ENCODE measurements at regions of chr2 and their contacts with region 1.

Region 1: DNA sequence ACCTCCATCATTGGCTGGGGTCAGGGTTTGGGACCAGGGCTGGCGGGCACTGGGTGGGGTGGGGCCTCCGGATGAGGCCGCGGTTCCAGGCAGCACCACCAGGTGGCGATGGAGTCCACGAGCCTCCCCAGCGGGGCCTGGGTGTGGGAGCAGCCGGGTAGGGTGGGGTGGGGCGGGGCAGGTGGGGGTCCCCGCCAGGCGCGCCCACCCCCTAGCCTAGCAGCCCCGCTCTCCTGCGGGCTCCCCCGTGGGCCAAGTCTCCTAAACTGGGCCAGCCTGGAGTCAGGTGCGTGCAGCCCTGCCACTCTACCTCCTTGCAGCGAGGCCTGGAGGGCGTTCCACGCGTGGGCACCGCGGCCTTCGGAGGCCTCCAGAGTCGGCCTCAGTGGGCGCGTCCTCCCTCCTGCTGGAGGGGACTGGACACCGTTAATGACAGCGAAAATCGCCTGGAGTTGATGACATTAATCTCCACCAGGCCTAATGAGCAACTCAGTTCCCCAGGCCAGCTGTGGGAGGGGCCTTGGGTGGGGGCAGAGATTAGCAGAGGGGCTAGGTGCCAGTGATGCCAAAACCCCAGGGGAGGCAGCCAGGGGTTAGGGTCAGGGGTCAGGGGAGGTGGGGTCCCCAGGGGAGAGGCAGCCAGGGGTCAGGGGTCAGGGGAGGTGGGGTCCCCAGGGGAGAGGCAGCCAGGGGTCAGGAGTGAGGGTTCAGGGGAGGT is 187.6 kb downstream of the TWIST2 start:
- DNase-seq: peak; percentile 43 to 79 (median 67)
- ATAC-seq: peak; percentile 91
- H3K4me3 ChIP-seq: no peak overlapping the region
- H3K4me3 Mint-ChIP-seq: no peak overlapping the region
- H3K27ac ChIP-seq: no peak overlapping the region
- H3K27ac Mint-ChIP-seq: no peak overlapping the region
- H3K4me1 ChIP-seq: no peaks in the 10 kb centered on the region
- H3K4me1 Mint-ChIP-seq: no peaks in the 10 kb centered on the region
- H3K27me3 ChIP-seq: peaks cover 0 to 6% of the 10 kb centered on the region in 2 experiments
- H3K27me3 Mint-ChIP-seq: peaks cover 7% of the 10 kb centered on the region
- CTCF ChIP-seq: peak; percentile 85

Region 2: DNA sequence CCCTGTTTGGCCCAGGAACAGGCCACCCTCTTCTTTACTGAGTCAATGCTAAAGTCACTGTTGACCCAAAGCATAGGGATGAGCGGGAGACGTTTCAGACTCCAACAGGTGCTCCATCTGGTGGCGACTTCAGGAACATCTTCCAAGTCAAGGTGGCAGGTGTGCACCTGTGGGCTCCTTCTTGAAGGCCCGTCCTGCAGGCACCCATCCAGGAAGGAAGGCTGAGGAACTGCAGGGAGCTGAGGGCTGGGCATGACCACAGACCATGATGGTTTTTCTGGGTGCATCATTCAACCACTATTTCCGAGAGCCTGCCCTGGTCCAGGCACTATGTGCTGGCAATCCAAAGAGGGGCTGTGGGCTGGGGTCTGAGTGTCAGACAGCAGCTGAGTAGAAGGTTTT is 846.8 kb after region 1 on chr2:
- CTCF ChIA-PET with region 1: interaction called, 6 read pairs
- POLR2A ChIA-PET with region 1: no interaction called
- intact Hi-C with region 1: loop called in 1 of 2 experiments (anchors 1 kb)
- DNase-seq: peak; percentile 33 to 70 (median 53)
- ATAC-seq: no peak
- H3K4me3 ChIP-seq: no peak overlapping the region
- H3K4me3 Mint-ChIP-seq: no peak overlapping the region
- H3K27ac ChIP-seq: no peak overlapping the region
- H3K27ac Mint-ChIP-seq: no peak overlapping the region
- H3K4me1 ChIP-seq: no peaks in the 10 kb centered on the region
- H3K4me1 Mint-ChIP-seq: peaks cover 3% of the 10 kb centered on the region
- H3K27me3 ChIP-seq: no peaks in the 10 kb centered on the region
- H3K27me3 Mint-ChIP-seq: peaks cover 12% of the 10 kb centered on the region
- CTCF ChIP-seq: peak; percentile 55

Region 3: GRCh38 chr2:239991689-239992314 is 956.3 kb after region 1 on chr2:
- CTCF ChIA-PET with region 1: interaction called, 12 read pairs
- POLR2A ChIA-PET with region 1: no interaction called
- intact Hi-C with region 1: loop called in 1 of 2 experiments (anchors 1 kb)
- DNase-seq: peak in 2 of 9 experiments; percentile 54 to 65
- ATAC-seq: peak; percentile 69
- H3K4me3 ChIP-seq: no peak overlapping the region
- H3K4me3 Mint-ChIP-seq: no peak overlapping the region
- H3K27ac ChIP-seq: no peak overlapping the region
- H3K27ac Mint-ChIP-seq: no peak overlapping the region
- H3K4me1 ChIP-seq: no peaks in the 10 kb centered on the region
- H3K4me1 Mint-ChIP-seq: no peaks in the 10 kb centered on the region
- H3K27me3 ChIP-seq: no peaks in the 10 kb centered on the region
- H3K27me3 Mint-ChIP-seq: no peaks in the 10 kb centered on the region
- CTCF ChIP-seq: peak; percentile 99